ENCODE measurements at regions of chr17 and their contacts with region 1.

Region 1: GRCh38 chr17:65055348-65056261 is 935 bp downstream of the GNA13 start:
- DNase-seq: peak; percentile 68
- ATAC-seq: peak; percentile 13
- H3K4me3 ChIP-seq: peak overlapping the region; percentile 85 to 99 (median 90)
- H3K4me3 Mint-ChIP-seq: peak overlapping the region; percentile 99
- H3K27ac ChIP-seq: peak overlapping the region; percentile 96 to 97
- H3K27ac Mint-ChIP-seq: peak overlapping the region; percentile 98
- H3K4me1 ChIP-seq: peaks cover 21 to 25% of the 10 kb centered on the region in 2 donors
- H3K4me1 Mint-ChIP-seq: peaks cover 52% of the 10 kb centered on the region
- H3K27me3 ChIP-seq: no peaks in the 10 kb centered on the region
- H3K27me3 Mint-ChIP-seq: no peaks in the 10 kb centered on the region
- CTCF ChIP-seq: no peak

Region 2: GRCh38 chr17:63741221-63742049 is 1314.2 kb before region 1 on chr17 and contains the start of gene STRADA:
- CTCF ChIA-PET with region 1: no interaction called
- POLR2A ChIA-PET with region 1: no interaction called
- intact Hi-C with region 1: loop called (anchors 10 kb)
- DNase-seq: peak; percentile 99
- ATAC-seq: peak; percentile 89
- H3K4me3 ChIP-seq: peak within 1 kb of the TSS; percentile 85 to 99 (median 93)
- H3K4me3 Mint-ChIP-seq: peak within 1 kb of the TSS; percentile 89
- H3K27ac ChIP-seq: peak within 1 kb of the TSS; percentile 97
- H3K27ac Mint-ChIP-seq: peak within 1 kb of the TSS; percentile 93
- H3K4me1 ChIP-seq: peaks cover 15 to 28% of the 10 kb centered on the region in 2 donors
- H3K4me1 Mint-ChIP-seq: peaks cover 28% of the 10 kb centered on the region
- H3K27me3 ChIP-seq: no peaks in the 10 kb centered on the region
- H3K27me3 Mint-ChIP-seq: no peaks in the 10 kb centered on the region
- CTCF ChIP-seq: no peak
- total RNA-seq, gene STRADA: 87.4 and 93.2 TPM in 2 replicates

Region 3: GRCh38 chr17:64920026-64920418 is 135.6 kb before region 1 on chr17:
- CTCF ChIA-PET with region 1: no interaction called
- POLR2A ChIA-PET with region 1: interaction called, 8 read pairs
- intact Hi-C with region 1: loop called (anchors 5 kb)
- DNase-seq: no peak
- ATAC-seq: no peak
- H3K4me3 ChIP-seq: peak overlapping the region in 4 of 5 experiments; percentile 58 to 85 (median 66)
- H3K4me3 Mint-ChIP-seq: peak overlapping the region; percentile 96
- H3K27ac ChIP-seq: peak overlapping the region; percentile 84 to 90
- H3K27ac Mint-ChIP-seq: peak overlapping the region; percentile 99
- H3K4me1 ChIP-seq: peaks cover 21 to 26% of the 10 kb centered on the region in 2 donors
- H3K4me1 Mint-ChIP-seq: peaks cover 39% of the 10 kb centered on the region
- H3K27me3 ChIP-seq: no peaks in the 10 kb centered on the region
- H3K27me3 Mint-ChIP-seq: no peaks in the 10 kb centered on the region
- CTCF ChIP-seq: no peak

Region 4: GRCh38 chr17:64984851-64985521 is 70.6 kb before region 1 on chr17:
- CTCF ChIA-PET with region 1: interaction called, 7 read pairs
- POLR2A ChIA-PET with region 1: interaction called, 18 read pairs
- intact Hi-C with region 1: loop called (anchors 1 kb)
- DNase-seq: peak; percentile 44
- ATAC-seq: no peak
- H3K4me3 ChIP-seq: peak overlapping the region in 1 of 5 experiments; percentile 50
- H3K4me3 Mint-ChIP-seq: peak overlapping the region; percentile 81
- H3K27ac ChIP-seq: peak overlapping the region; percentile 99 to 100
- H3K27ac Mint-ChIP-seq: peak overlapping the region; percentile 99
- H3K4me1 ChIP-seq: peaks cover 33 to 49% of the 10 kb centered on the region in 2 donors
- H3K4me1 Mint-ChIP-seq: peaks cover 51% of the 10 kb centered on the region
- H3K27me3 ChIP-seq: no peaks in the 10 kb centered on the region
- H3K27me3 Mint-ChIP-seq: no peaks in the 10 kb centered on the region
- CTCF ChIP-seq: no peak

Region 5: DNA sequence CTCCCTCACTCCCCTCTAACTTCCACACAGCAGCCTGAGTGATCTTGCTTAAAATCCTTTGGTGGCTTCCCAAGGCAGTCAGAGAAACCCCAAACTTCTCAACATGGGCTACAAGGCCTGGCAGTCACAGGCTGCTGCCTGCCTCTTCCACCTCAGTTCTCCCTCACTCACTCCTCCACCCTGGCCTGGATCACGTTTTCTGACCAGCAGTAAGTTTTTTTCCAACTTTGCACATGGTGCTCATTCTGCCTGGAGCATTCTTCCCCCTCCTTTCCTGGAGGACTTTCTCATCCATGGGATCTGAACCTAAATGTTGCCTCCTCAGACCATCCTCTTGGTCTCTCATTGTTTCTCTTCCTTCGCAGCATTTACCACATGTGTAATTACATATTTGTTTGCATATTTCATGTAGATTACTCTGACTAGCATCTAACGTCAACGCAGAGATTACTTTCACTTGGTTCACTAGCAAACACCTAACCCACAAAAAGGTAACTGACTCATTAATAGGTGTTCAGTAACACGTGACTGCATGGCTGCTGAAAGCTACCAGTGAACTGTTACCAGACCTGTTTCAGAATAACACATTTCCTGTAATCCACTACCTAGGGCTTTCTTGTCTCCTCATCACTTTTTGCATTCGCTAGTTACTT is 16.1 kb before region 1 on chr17:
- CTCF ChIA-PET with region 1: interaction called, 4 read pairs
- POLR2A ChIA-PET with region 1: interaction called, 7 read pairs
- intact Hi-C with region 1: loop called (anchors 2 kb)
- DNase-seq: peak; percentile 83
- ATAC-seq: peak; percentile 78
- H3K4me3 ChIP-seq: no peak overlapping the region
- H3K4me3 Mint-ChIP-seq: peak overlapping the region; percentile 78
- H3K27ac ChIP-seq: peak overlapping the region; percentile 68 to 74
- H3K27ac Mint-ChIP-seq: peak overlapping the region; percentile 83
- H3K4me1 ChIP-seq: peaks cover 83 to 86% of the 10 kb centered on the region in 2 donors
- H3K4me1 Mint-ChIP-seq: peaks cover 82% of the 10 kb centered on the region
- H3K27me3 ChIP-seq: no peaks in the 10 kb centered on the region
- H3K27me3 Mint-ChIP-seq: no peaks in the 10 kb centered on the region
- CTCF ChIP-seq: no peak

Measured in B cell (primary cell).